HepG2 (cell line): ENCODE measurements at regions of chr10 and their contacts with region 1.

Region 1: DNA sequence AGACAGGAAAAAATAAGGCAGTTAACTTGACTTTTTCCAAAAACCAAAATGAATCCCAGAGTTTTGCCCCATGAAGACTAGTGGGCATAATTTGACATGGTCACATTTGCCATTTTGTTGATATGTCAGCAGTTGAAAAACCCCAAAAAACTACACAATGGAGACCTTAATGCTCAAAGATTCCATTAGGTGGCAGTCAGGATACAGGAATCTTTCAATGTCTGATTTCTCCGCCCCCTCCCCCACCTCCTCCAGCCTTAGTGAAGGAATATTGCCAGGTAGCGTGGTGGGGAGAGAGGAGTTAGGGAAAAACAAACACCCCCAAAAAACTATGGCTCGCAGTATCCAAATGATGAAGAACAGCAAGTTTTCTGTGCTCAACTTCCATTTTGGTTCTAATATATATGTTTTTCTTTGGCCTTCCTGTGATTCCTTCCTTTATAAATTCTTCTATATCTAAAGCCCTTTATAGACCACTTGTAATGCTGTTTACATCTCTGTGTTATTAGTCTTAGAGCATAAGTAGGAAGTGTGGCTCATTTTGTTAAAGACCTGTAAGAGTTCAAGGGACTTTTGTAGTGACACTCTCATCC is 6.7 kb upstream of the SMNDC1 start:
- DNase-seq: peak; percentile 42
- ATAC-seq: peak; percentile 68
- H3K4me3 ChIP-seq: no peak overlapping the region
- H3K27ac ChIP-seq: no peak overlapping the region
- H3K4me1 ChIP-seq: no peaks in the 10 kb centered on the region
- H3K27me3 ChIP-seq: peaks cover 0 to 3% of the 10 kb centered on the region in 2 experiments; a peak in 1 of 5 replicates
- CTCF ChIP-seq: peak; percentile 77
- EP300 ChIP-seq: no peak
- POLR2A ChIP-seq: no peak
- RAD21 ChIP-seq: peak; percentile 48; the same call in 1 of the 2 replicates

Region 2: GRCh38 chr10:110203500-110204455 is 107.7 kb before region 1 on chr10:
- CTCF ChIA-PET with region 1: no interaction called
- POLR2A ChIA-PET with region 1: no interaction called
- in situ Hi-C with region 1: no loop called
- intact Hi-C with region 1: no loop called
- DNase-seq: no peak
- ATAC-seq: peak; percentile 18; the same call in 2 of the 3 replicates
- H3K4me3 ChIP-seq: peak overlapping the region in 1 of 3 experiments; percentile 9; a peak in 2 of 6 replicates
- H3K27ac ChIP-seq: no peak overlapping the region
- H3K4me1 ChIP-seq: peaks cover 30% of the 10 kb centered on the region
- H3K27me3 ChIP-seq: peaks cover 3 to 27% of the 10 kb centered on the region in 2 experiments; a peak in 3 of 5 replicates
- CTCF ChIP-seq: no peak
- EP300 ChIP-seq: no peak
- POLR2A ChIP-seq: no peak
- RAD21 ChIP-seq: no peak

Region 3: GRCh38 chr10:110530131-110530831 is 218.8 kb after region 1 on chr10:
- CTCF ChIA-PET with region 1: interaction called, 7 read pairs
- POLR2A ChIA-PET with region 1: no interaction called
- in situ Hi-C with region 1: loop called (anchors 5 kb)
- intact Hi-C with region 1: no loop called
- DNase-seq: peak; percentile 16
- ATAC-seq: peak; percentile 89
- H3K4me3 ChIP-seq: peak overlapping the region in 1 of 3 experiments; percentile 23; a peak in 1 of 6 replicates
- H3K27ac ChIP-seq: no peak overlapping the region
- H3K4me1 ChIP-seq: peaks cover 33% of the 10 kb centered on the region
- H3K27me3 ChIP-seq: peaks cover 2 to 10% of the 10 kb centered on the region in 2 experiments; a peak in 3 of 5 replicates
- CTCF ChIP-seq: no peak
- EP300 ChIP-seq: no peak
- POLR2A ChIP-seq: no peak
- RAD21 ChIP-seq: no peak